Body of pancreas (tissue), 4 donors: ENCODE measurements at regions of chr6 and their contacts with region 1.

Region 1: GRCh38 chr6:33633462-33634158 is 12.5 kb downstream of the ITPR3 start:
- DNase-seq: peak; percentile 61 to 72 (median 66)
- ATAC-seq: peak; percentile 86
- H3K4me3 ChIP-seq: no peak overlapping the region
- H3K27ac ChIP-seq: peak overlapping the region in 3 of 4 donors; percentile 29 to 75 (median 64)
- H3K4me1 ChIP-seq: peaks cover 27% of the 10 kb centered on the region
- H3K27me3 ChIP-seq: no peaks in the 10 kb centered on the region
- CTCF ChIP-seq: no peak
- POLR2A ChIP-seq: no peak

Region 2: DNA sequence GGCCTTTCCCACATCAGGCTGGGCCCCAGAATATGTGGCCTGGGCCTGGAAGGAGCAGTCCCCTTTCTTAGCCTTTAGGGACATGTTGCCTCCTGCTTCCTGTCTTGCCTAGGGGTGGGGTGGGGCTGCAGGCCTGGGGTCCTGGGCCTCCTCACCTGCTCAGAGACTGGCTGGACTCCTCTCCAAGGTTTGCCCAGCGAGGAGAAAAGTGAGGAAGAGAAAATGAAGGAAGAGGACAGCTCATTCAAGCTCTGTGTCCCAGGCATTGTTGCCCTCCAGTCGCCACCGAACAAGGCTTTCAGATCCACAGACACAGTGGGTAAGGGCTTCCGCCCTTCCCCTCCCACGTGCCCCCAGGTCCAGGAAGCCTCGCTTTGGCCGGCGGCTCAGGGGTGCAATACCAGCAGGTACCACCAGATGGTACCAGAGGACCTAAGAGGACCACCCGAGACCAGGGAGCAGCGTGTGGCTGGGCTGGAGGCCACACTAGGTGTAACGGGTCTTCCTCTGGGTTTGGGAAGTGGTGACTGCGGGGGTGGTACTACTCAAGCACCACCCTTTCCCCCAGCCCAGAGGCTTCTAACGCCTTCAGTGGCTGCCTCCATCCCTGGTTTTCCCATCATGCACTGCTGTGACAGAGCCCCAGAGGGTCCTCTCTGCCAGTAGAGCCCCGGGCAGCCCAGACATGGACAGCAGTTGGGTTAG is 48.1 kb before region 1 on chr6:
- intact Hi-C with region 1: loop called (anchors 5 kb)
- DNase-seq: peak; percentile 80 to 86 (median 83)
- ATAC-seq: peak; percentile 45
- H3K4me3 ChIP-seq: no peak overlapping the region
- H3K27ac ChIP-seq: no peak overlapping the region
- H3K4me1 ChIP-seq: peaks cover 26% of the 10 kb centered on the region
- H3K27me3 ChIP-seq: no peaks in the 10 kb centered on the region
- CTCF ChIP-seq: peak; percentile 91 to 98 (median 95)
- POLR2A ChIP-seq: no peak

Region 3: DNA sequence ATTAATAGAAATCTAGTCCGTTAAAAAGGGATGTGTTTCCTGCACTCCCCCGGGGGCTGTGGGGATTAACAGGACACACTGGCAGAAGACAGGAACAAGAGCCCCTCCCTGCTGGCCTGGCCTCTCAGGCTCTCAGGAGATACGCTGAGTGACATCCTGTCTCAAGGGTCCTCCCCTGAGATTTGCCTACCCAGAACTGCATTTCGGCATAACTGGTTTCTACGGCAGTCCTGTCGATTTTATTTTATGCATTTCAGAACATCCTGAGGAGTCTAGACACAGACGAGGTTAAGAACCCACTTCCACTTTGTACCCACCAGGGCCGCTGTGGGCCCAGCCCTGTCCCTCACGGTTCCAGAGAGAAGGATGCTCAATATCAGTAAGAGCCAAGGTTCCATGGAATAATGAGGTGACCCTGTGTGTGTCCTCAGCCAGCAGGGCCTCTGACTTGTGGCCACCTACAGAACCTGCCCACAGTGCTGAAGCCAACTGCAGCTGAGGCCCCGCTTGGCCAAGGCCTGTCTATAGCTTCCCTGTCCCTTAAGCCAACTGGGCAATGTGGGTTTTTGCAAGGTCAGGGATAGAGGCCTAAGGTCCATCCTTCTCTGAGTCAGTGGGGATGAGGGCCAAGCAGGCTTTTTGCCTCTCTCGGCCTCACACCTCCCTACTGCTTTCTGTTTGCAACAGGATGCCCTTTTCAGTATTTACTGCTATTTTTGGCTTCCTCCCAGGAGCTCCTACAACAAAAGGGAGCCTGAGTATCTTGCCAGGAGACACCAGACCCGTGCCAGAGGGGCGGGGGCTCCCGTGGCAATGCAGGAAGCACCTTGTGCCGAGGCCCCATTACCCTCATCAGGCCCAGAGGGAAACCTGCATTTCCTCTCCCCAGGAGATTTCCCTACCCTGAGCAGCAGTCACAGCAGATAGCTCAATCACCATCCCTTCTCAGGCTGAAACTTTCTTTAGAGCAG is 63.2 kb after region 1 on chr6:
- intact Hi-C with region 1: loop called (anchors 10 kb)
- DNase-seq: peak in 3 of 4 donors; percentile 38 to 45 (median 45)
- ATAC-seq: peak; percentile 38
- H3K4me3 ChIP-seq: no peak overlapping the region
- H3K27ac ChIP-seq: peak overlapping the region in 2 of 4 donors; percentile 26 to 42
- H3K4me1 ChIP-seq: peaks cover 8% of the 10 kb centered on the region
- H3K27me3 ChIP-seq: no peaks in the 10 kb centered on the region
- CTCF ChIP-seq: no peak
- POLR2A ChIP-seq: no peak